ENCODE measurements at regions of chr4 and their contacts with region 1.

Region 1: DNA sequence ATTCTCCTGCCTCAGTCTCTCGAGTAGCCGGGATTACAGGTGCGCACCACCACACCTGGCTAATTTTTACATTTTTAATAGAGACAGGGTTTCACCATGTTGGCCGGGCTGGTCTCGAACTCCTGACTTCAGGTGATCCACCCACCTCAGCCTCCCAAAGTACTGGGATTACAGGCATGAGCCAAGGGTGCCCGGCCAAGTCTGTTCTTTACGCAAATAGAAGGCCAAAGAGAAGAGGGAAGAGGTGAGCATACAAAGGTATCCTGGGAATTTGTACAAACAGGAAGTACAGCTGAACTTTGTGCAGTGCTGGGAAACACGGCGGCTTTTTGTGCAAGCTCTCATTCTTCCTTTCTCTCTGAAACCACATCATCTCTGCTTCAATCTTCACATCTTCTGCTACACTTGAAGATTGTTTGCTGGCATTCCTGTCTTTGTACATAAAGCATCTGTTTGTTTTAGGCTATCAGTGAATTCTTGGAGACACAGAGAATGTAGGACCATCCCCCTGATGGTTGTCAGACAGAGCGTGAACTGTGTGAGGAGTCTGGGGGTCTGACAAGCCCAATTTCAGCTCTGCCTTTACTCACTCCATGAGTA is 71.9 kb upstream of the PRSS48 start:
- DNase-seq: peak; percentile 70 to 79
- H3K4me3 ChIP-seq: no peak overlapping the region; the same call in 1 of the 2 replicates
- H3K4me3 Mint-ChIP-seq: peak overlapping the region; percentile 67
- H3K27ac Mint-ChIP-seq: peak overlapping the region; percentile 79
- H3K4me1 ChIP-seq: peaks cover 57% of the 10 kb centered on the region
- H3K4me1 Mint-ChIP-seq: peaks cover 23% of the 10 kb centered on the region
- H3K27me3 ChIP-seq: no peaks in the 10 kb centered on the region
- H3K27me3 Mint-ChIP-seq: no peaks in the 10 kb centered on the region
- CTCF ChIP-seq: no peak

Region 2: GRCh38 chr4:151184523-151185458 is 20.2 kb before region 1 on chr4:
- CTCF ChIA-PET with region 1: interaction called, 6 read pairs
- POLR2A ChIA-PET with region 1: no interaction called
- intact Hi-C with region 1: loop called (anchors 2 kb)
- DNase-seq: peak; percentile 10 to 48
- H3K4me3 ChIP-seq: no peak overlapping the region
- H3K4me3 Mint-ChIP-seq: no peak overlapping the region
- H3K27ac Mint-ChIP-seq: peak overlapping the region; percentile 14
- H3K4me1 ChIP-seq: peaks cover 16% of the 10 kb centered on the region
- H3K4me1 Mint-ChIP-seq: peaks cover 14% of the 10 kb centered on the region
- H3K27me3 ChIP-seq: no peaks in the 10 kb centered on the region
- H3K27me3 Mint-ChIP-seq: no peaks in the 10 kb centered on the region
- CTCF ChIP-seq: no peak

Region 3: DNA sequence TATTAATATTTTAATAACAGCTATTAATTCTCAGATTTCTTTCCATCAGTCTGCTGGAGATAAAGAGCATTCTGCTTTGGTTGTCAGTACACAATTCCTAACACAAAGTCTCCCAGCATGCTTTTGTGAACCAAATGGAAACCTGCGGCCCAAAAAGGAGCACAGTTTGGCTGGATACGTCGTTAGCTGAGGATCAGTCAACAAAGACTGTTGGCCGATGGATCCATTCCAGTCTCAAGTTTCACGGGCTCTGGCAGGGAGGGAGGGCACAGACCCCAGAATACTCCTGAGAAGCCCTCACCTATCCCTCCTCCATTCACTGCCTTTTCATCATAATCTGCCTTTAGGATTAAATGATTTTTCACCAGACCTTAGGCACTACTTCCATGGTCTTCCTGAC is 45.7 kb after region 1 on chr4:
- CTCF ChIA-PET with region 1: no interaction called
- POLR2A ChIA-PET with region 1: no interaction called
- intact Hi-C with region 1: no loop called
- DNase-seq: no peak
- H3K4me3 ChIP-seq: no peak overlapping the region
- H3K4me3 Mint-ChIP-seq: no peak overlapping the region
- H3K27ac Mint-ChIP-seq: no peak overlapping the region
- H3K4me1 ChIP-seq: peaks cover 7% of the 10 kb centered on the region
- H3K4me1 Mint-ChIP-seq: no peaks in the 10 kb centered on the region
- H3K27me3 ChIP-seq: no peaks in the 10 kb centered on the region
- H3K27me3 Mint-ChIP-seq: no peaks in the 10 kb centered on the region
- CTCF ChIP-seq: no peak

Measured in Caco-2 (cell line).